ENCODE measurements at regions of chr17 and their contacts with region 1.

Region 1: DNA sequence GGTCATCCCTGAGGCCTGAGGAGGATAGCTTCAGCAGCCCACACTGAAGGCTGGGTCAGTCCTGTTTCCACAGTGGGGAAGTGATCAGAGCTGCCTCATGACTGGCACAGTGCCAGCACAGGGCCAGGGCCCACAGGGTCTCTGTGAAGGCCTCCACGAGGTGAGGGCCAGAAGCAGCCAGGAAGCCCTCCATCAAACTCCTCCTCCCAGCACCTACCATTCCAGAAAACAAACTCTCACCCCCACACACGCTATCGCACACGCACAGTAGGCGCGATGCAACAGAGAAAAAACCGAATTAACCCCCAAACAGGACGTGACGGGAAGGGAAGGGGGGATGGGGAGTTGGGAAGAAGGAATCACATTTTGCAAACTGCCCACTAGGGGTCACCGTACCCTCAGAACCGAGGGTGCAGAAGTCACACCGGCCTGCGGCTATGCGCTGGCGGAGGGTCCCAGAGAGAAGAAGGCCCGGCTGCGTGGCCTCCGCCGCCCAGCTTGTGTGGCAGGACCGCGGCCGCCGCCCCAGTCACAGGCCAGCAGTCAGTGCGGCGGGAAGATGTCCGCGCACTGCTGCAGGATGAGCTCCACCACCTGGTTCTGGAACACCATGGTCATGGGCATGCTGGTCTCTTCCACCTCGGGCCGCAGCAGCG is 37.6 kb downstream of the ARHGAP27 start:
- DNase-seq: peak; percentile 90
- ATAC-seq: peak; percentile 97
- H3K4me3 ChIP-seq: no peak overlapping the region
- H3K27ac ChIP-seq: no peak overlapping the region; the same call in 1 of the 2 replicates
- H3K4me1 ChIP-seq: peaks cover 5% of the 10 kb centered on the region
- H3K27me3 ChIP-seq: peaks cover 7% of the 10 kb centered on the region; the same call in 1 of the 2 replicates
- CTCF ChIP-seq: peak; percentile 89
- POLR2A ChIP-seq: no peak
- RAD21 ChIP-seq: peak; percentile 81

Region 2: DNA sequence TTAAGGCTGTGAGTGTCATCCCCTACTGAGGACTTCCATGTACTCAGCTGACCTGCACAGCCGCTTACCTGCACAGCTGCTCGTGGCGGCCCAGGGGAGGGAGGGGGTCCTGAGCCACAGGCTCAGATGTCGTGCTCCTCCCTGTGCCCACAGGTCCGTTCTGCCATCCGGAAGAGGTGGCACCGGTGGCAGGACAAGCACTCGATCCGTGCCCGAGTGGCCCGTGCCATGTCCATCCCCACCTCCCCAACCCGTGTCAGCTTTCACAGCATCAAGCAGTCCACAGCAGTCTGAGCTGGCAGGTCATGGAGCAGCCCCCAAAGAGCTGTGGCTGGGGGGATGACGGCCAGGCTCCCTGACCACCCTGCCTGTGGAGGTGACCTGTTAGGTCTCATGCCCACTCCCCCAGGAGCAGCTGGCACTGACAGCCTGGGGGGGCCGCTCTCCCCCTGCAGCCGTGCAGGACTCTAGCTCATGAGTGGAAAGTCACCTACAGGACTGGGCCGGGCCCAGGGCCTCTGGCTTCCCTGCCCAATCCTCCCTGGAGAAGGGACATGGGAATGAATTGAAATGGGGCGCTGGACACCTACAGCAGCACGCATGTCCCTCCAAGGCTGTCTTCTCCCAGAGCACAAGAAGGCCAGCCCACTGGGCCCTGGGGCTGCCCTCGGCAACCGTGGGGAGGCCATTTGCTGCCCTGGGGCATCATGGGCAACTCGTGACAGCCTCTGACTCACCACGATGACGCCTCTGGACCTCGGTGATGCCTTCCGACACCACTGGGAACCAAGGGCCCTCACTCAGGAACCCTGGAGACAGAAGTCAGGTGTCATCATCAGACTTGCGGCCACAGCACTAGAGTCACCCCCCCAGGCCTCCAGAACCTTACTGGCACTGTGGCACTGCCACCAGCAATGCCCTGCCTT is 439.7 kb after region 1 on chr17:
- CTCF ChIA-PET with region 1: no interaction called
- POLR2A ChIA-PET with region 1: no interaction called
- dilution Hi-C with region 1: no loop called
- in situ Hi-C with region 1: loop called (anchors 25 kb)
- intact Hi-C with region 1: loop called (anchors 2 kb)
- DNase-seq: no peak
- ATAC-seq: no peak
- H3K4me3 ChIP-seq: no peak overlapping the region
- H3K27ac ChIP-seq: no peak overlapping the region
- H3K4me1 ChIP-seq: no peaks in the 10 kb centered on the region
- H3K27me3 ChIP-seq: peaks cover 15% of the 10 kb centered on the region; the same call in 1 of the 2 replicates
- CTCF ChIP-seq: no peak
- POLR2A ChIP-seq: no peak
- RAD21 ChIP-seq: no peak